PC-9 (cell line): ENCODE measurements at regions of chr1 and their contacts with region 1.

Region 1: GRCh38 chr1:229258031-229258756 is 12.7 kb upstream of the RAB4A start:
- DNase-seq: peak; percentile 51 to 55
- H3K4me3 ChIP-seq: no peak overlapping the region
- H3K27ac ChIP-seq: no peak overlapping the region
- H3K4me1 ChIP-seq: 0 out of 2 replicates have a peak, but pooled peaks cover 4% of the 10 kb centered on the region
- H3K27me3 ChIP-seq: no peaks in the 10 kb centered on the region
- CTCF ChIP-seq: peak; percentile 85

Region 2: GRCh38 chr1:228664399-228664914 is 593.7 kb before region 1 on chr1:
- CTCF ChIA-PET with region 1: no interaction called
- POLR2A ChIA-PET with region 1: no interaction called
- intact Hi-C with region 1: loop called (anchors 1 kb)
- DNase-seq: peak in 1 of 2 experiments; percentile 53
- H3K4me3 ChIP-seq: no peak overlapping the region
- H3K27ac ChIP-seq: no peak overlapping the region
- H3K4me1 ChIP-seq: no peaks in the 10 kb centered on the region
- H3K27me3 ChIP-seq: 0 out of 2 replicates have a peak, but pooled peaks cover 10% of the 10 kb centered on the region
- CTCF ChIP-seq: peak; percentile 89

Region 3: DNA sequence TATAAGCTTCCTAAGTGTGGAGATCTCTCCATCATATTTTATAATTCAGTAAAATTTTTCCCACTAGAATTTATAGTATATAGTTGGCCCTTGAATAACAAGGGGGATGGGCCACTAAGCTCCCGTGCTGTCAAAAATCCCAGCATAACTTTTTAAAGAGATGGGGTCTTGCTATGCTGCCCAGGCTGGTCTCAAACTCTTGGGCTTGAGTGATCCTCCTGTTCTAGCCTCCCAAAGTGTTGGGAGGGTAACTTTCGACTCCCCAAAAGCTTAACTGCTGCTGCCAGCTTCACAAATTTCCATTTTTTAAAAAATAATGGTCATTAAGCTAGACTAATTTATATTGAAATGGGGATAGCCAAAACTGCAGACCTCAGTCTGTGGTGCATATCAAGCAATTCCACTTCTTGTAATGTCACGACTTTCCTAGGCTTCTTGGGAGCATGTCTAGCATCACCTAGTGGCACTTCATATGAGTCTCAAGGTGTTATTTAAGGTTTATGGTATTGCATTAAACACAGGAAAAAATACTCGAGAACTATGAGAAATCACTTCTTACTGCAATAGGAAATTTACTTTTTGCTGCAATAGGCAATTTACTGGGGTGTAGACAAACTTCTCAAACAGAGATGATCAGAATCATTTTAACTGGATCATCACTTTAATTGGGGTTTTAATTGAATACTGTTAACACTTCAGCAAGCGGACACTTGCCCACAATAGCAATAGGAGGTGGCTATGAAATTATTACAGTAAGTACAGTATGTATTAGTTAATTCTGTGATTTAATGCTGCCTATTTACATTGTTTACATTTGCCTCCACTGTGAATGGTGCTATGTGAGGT is 195.0 kb after region 1 on chr1:
- CTCF ChIA-PET with region 1: interaction called, 3 read pairs
- POLR2A ChIA-PET with region 1: no interaction called
- intact Hi-C with region 1: loop called (anchors 1 kb)
- DNase-seq: no peak
- H3K4me3 ChIP-seq: no peak overlapping the region
- H3K27ac ChIP-seq: no peak overlapping the region
- H3K4me1 ChIP-seq: no peaks in the 10 kb centered on the region
- H3K27me3 ChIP-seq: no peaks in the 10 kb centered on the region
- CTCF ChIP-seq: peak; percentile 64

Region 4: GRCh38 chr1:229479660-229480399 is 221.6 kb after region 1 on chr1:
- CTCF ChIA-PET with region 1: interaction called, 21 read pairs
- POLR2A ChIA-PET with region 1: interaction called, 3 read pairs
- intact Hi-C with region 1: loop called (anchors 1 kb)
- DNase-seq: no peak
- H3K4me3 ChIP-seq: no peak overlapping the region
- H3K27ac ChIP-seq: no peak overlapping the region
- H3K4me1 ChIP-seq: no peaks in the 10 kb centered on the region
- H3K27me3 ChIP-seq: no peaks in the 10 kb centered on the region
- CTCF ChIP-seq: no peak

Region 5: DNA sequence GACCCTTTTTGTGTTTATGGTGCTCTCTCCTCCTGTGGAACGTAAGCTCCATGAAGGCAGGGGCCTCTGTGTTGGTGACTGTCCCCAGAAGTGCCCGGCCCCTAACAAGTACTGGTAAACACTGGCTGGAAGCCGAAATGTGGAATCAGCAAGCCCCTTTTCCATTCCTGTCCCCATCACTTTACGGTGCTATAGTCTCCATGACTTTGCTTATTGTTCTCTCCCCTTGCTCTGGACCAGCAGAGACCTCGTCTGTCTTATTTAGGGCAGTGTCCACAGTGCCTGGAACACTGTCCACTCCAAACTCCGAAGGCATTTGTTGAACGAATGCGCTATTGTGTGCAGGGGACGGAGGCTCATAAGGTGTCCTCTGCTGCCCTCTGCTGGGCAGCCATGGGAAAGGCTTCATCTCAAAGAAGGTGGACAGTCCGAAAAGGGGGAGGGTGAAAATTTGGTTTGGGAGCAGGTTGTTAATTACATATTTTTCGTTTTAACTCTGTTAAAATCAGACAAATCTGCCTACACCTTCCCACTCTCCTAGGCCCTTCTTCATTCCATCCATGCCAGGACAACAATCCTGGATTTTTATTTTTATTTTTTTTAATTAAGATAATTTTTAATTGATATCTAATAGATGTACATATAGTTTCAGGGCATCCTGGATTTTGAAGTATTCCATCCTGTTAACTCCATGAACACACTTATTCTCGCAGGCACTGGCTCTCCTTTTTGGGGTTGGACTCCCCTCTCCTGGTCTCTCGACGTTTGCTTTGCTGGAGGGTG is 1052.4 kb after region 1 on chr1:
- CTCF ChIA-PET with region 1: no interaction called
- POLR2A ChIA-PET with region 1: no interaction called
- intact Hi-C with region 1: loop called (anchors 1 kb)
- DNase-seq: peak; percentile 46 to 69
- H3K4me3 ChIP-seq: no peak overlapping the region
- H3K27ac ChIP-seq: no peak overlapping the region
- H3K4me1 ChIP-seq: peaks cover 20% of the 10 kb centered on the region
- H3K27me3 ChIP-seq: peaks cover 14% of the 10 kb centered on the region; the same call in 1 of the 2 replicates
- CTCF ChIP-seq: peak; percentile 94